ENCODE measurements at regions of chr1 and their contacts with region 1.

Region 1: GRCh38 chr1:224113918-224114786 is at the start of gene FBXO28:
- DNase-seq: peak; percentile 94 to 99
- H3K4me3 ChIP-seq: peak within 1 kb of the TSS; percentile 99
- CTCF ChIP-seq: no peak
- POLR2A ChIP-seq: peak in 1 of 2 donors; percentile 74
- total RNA-seq, gene FBXO28: 58.0 to 84.1 (median 67.2) TPM

Region 2: GRCh38 chr1:223345720-223346119 is 768.4 kb before region 1 on chr1:
- intact Hi-C with region 1: no loop called
- DNase-seq: peak in 1 of 2 donors; percentile 32
- H3K4me3 ChIP-seq: no peak overlapping the region
- CTCF ChIP-seq: no peak
- POLR2A ChIP-seq: no peak

Region 3: DNA sequence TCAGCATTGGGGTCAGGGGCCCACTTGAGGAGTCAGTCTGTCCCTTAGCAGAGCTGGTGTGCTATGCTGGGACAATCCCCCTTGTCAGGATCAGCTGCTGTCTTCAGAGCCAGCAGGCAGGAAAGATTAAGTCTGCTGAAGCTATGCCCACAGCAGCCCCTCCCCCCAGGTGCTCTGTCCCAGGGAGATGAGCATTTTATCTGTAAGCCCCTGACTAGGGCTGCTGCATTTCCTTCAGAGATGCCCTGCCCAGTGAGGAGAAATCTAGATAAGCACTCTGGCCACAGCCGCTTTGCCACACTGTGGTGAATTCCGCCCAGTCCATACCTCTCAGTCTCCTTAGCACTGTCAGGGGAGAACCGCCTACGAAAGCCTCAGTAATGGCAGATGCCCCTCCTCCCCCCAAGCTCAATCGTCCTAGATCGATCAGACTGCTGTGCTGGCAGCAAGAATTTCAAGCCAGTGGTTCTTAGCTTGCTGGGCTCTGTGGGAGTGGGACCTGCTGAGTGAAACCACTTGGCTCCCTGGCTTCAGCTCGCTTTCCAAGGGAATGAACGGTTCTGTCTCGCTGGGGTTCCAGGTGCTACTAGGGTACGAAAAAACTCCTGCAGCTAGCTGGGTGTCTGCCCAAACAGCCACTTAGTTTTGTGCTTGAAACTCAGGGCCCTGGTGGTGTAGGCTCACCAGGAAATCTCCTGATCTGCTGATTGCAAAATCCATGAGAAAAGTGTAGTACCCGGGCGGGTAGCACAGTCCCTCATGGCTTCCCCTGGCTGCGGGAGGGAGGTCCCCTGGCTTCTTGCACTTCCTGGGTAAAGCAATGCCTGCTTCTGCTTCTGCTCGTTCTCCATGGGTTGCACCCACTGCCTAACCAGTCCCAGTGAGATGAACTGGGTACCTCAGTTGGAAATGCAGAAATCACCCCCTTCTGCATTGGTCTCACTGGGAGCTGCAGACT is 243.3 kb before region 1 on chr1:
- intact Hi-C with region 1: no loop called
- DNase-seq: no peak
- H3K4me3 ChIP-seq: no peak overlapping the region
- CTCF ChIP-seq: no peak
- POLR2A ChIP-seq: no peak

Region 4: DNA sequence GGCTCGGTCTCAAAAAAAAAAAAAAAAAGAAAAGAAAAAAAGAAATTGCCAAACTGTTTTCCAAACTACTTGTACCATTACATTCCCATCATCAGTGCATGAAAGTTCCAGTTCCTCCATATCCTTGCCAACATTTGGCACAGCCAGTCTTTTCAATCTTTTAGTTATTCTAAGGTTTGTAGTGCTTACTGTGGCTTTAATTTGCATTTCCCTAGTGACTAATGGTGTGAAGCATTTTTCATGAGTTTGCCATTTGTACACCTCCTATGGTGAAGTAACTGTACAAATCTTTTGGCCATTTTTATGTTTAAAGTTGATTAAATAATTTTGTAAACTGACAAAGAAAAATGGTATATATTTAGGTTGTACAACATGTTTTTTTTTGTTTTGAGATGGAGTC is 139.6 kb after region 1 on chr1:
- intact Hi-C with region 1: no loop called
- DNase-seq: no peak
- H3K4me3 ChIP-seq: no peak overlapping the region
- CTCF ChIP-seq: no peak
- POLR2A ChIP-seq: no peak

Region 5: GRCh38 chr1:224329842-224330753 is 215.9 kb after region 1 on chr1 and contains the start of gene NVL:
- intact Hi-C with region 1: loop called (anchors 5 kb)
- DNase-seq: peak; percentile 80 to 96
- H3K4me3 ChIP-seq: peak within 1 kb of the TSS; percentile 84
- CTCF ChIP-seq: no peak
- POLR2A ChIP-seq: no peak
- total RNA-seq, gene NVL: 24.4 to 43.1 (median 32.1) TPM